Astrocyte of the cerebellum (primary cell): ENCODE measurements at regions of chr1 and their contacts with region 1.

Region 1: GRCh38 chr1:168280296-168280927 is at the start of gene TBX19:
- DNase-seq: no peak
- H3K4me3 ChIP-seq: no peak within 1 kb of the TSS
- CTCF ChIP-seq: no peak

Region 2: DNA sequence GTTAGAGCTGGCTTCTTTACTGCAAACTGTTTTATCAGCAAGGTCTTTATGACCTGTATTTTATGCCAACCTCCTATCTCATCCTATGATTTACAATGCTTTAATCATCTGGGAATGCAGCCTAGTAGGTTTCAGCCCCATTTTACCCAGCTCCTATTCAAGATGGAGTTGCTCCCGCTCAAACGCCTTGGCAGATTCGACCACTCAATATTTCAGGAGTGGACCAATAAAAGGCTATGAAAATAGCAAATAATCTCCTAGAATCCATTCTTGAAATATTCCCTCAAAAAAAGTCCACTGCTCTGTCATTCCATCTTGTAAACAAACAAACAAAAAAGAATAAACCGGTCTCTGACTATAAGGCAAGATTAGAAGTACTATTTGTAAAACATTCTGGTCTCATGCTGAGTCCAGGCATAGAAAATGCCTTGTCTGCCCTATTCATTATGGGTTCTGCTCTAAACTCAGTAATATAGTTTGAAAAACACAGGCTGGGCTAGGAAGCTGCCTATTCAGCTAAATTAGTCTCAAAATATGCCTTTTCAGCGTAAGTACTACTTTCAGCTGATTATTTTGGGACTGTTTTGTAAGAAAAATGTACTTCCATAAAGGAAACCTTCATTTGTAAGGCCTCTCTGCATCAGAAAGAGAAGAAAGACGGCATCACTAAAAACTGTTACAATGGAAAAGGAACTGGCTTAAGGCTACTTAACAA is 53.3 kb after region 1 on chr1:
- in situ Hi-C with region 1: loop called (anchors 5 kb)
- DNase-seq: no peak
- H3K4me3 ChIP-seq: no peak overlapping the region
- CTCF ChIP-seq: no peak